MCF 10A (cell line): ENCODE measurements at regions of chr1 and their contacts with region 1.

Region 1: DNA sequence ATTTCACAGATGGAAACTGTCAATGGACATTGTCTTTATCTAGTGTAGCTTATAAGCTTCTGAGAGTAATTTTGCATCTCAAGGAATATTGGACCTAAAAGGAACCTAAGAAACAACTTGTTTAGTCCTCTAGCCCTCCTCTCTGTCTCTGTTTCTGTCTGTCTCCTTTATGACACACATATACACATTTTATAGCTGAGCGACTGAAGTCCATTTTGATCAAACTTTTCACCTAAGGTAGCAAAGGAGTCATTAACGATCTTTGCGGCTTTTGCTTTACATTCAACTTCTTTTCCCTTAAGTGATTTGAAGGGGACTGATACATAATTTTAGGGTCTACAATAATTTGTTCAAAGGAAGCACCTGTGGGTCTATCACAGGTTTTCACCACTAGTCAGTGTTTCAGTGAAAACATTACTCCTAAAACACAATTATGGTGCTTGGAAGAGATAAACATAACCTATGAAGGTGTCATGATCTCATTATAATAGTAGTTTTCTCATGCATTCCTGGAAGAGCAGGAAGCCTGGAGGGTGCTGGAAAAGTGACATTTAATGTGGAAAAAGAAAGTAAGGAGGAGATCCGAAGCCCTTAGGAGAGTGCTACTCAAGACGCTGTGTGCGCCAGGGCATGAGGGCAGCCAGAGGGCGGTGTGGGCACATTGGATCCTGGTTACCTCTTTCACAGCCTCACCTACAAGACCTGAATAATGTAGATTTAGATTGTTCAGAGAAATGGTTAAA is 248.6 kb downstream of the DNM3 start:
- DNase-seq: peak; percentile 79
- H3K4me3 Mint-ChIP-seq: no peak overlapping the region
- H3K27ac Mint-ChIP-seq: no peak overlapping the region
- H3K4me1 Mint-ChIP-seq: peaks cover 8% of the 10 kb centered on the region
- H3K27me3 Mint-ChIP-seq: no peaks in the 10 kb centered on the region
- CTCF ChIP-seq: peak; percentile 97

Region 2: DNA sequence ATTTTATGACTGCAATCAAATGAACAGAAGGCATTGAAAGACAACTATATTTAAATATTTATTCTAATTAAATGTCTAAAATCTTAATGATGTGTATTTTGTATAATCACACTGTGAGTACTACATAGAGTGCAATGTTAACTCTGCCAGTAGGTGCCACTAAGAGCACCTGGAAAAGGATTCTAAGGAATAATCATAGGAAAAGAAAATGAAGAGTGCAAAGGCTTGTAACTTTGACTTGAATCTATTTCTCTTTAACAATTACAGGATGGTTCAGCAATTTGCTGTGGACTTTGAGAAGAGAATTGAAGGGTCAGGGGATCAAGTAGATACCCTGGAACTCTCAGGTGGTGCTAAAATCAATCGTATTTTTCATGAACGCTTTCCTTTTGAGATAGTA is 48.2 kb before region 1 on chr1:
- CTCF ChIA-PET with region 1: interaction called, 10 read pairs
- POLR2A ChIA-PET with region 1: interaction called, 3 read pairs
- intact Hi-C with region 1: no loop called
- DNase-seq: peak; percentile 16
- H3K4me3 Mint-ChIP-seq: no peak overlapping the region
- H3K27ac Mint-ChIP-seq: no peak overlapping the region
- H3K4me1 Mint-ChIP-seq: peaks cover 21% of the 10 kb centered on the region
- H3K27me3 Mint-ChIP-seq: no peaks in the 10 kb centered on the region
- CTCF ChIP-seq: peak; percentile 19

Region 3: DNA sequence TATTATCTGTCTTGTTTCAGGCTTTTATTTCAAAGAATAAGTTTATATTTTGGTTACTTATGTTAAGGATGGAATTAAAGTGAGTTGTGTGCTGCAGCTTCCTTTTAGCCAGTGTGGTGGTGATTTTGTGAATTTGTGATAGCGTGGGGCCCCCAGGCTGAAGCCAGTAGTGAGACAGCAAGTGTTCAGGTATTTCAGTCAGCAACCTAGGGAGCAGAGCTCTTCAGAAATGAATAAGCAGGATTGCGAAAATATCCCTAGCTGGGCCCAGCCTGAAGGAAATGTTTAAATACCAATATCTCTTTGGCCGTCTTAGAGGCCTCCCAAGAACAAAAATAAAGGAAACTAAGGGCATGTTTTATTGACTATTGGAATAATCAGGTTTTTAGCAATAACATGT is 179.7 kb after region 1 on chr1:
- CTCF ChIA-PET with region 1: interaction called, 8 read pairs
- POLR2A ChIA-PET with region 1: no interaction called
- intact Hi-C with region 1: loop called (anchors 5 kb)
- DNase-seq: peak; percentile 63
- H3K4me3 Mint-ChIP-seq: no peak overlapping the region
- H3K27ac Mint-ChIP-seq: no peak overlapping the region
- H3K4me1 Mint-ChIP-seq: peaks cover 29% of the 10 kb centered on the region
- H3K27me3 Mint-ChIP-seq: no peaks in the 10 kb centered on the region
- CTCF ChIP-seq: no peak

Region 4: GRCh38 chr1:172357753-172358385 is 267.9 kb after region 1 on chr1:
- CTCF ChIA-PET with region 1: interaction called, 10 read pairs
- POLR2A ChIA-PET with region 1: no interaction called
- intact Hi-C with region 1: loop called (anchors 1 kb)
- DNase-seq: peak; percentile 18
- H3K4me3 Mint-ChIP-seq: peak overlapping the region; percentile 53
- H3K27ac Mint-ChIP-seq: peak overlapping the region; percentile 87
- H3K4me1 Mint-ChIP-seq: peaks cover 62% of the 10 kb centered on the region
- H3K27me3 Mint-ChIP-seq: no peaks in the 10 kb centered on the region
- CTCF ChIP-seq: no peak

Region 5: DNA sequence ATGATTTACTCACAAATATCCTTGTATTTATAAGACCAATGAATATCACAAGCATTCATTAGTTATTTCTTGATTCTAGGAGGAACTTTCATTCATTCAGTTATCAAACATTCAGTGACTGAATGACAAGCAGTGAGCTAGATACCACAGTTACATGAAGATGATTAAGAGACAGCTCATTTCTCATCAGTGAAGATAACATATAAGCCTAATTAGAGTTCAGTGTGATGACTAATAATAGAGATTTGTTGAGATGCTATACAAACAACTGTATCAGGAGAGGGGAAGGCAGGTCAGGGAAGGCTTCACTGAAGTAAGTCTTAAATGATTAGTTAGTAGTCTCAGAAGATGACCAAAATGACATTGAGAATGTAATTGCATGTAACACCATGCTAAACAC is 316.0 kb after region 1 on chr1:
- CTCF ChIA-PET with region 1: interaction called, 135 read pairs
- POLR2A ChIA-PET with region 1: no interaction called
- intact Hi-C with region 1: no loop called
- DNase-seq: no peak
- H3K4me3 Mint-ChIP-seq: no peak overlapping the region
- H3K27ac Mint-ChIP-seq: no peak overlapping the region
- H3K4me1 Mint-ChIP-seq: no peaks in the 10 kb centered on the region
- H3K27me3 Mint-ChIP-seq: no peaks in the 10 kb centered on the region
- CTCF ChIP-seq: no peak

Region 6: GRCh38 chr1:172429331-172430127 is 339.6 kb after region 1 on chr1:
- CTCF ChIA-PET with region 1: interaction called, 11 read pairs
- POLR2A ChIA-PET with region 1: no interaction called
- intact Hi-C with region 1: loop called (anchors 1 kb)
- DNase-seq: peak; percentile 83
- H3K4me3 Mint-ChIP-seq: no peak overlapping the region
- H3K27ac Mint-ChIP-seq: no peak overlapping the region
- H3K4me1 Mint-ChIP-seq: peaks cover 5% of the 10 kb centered on the region
- H3K27me3 Mint-ChIP-seq: no peaks in the 10 kb centered on the region
- CTCF ChIP-seq: peak; percentile 78